Right cardiac atrium (tissue), 5 donors: ENCODE measurements at regions of chr12 and their contacts with region 1.

Region 1: GRCh38 chr12:92136965-92137721 is 8.5 kb downstream of the BTG1 start:
- DNase-seq: no peak
- ATAC-seq: no peak
- H3K4me3 ChIP-seq: peak overlapping the region; percentile 70
- H3K27ac ChIP-seq: peak overlapping the region; percentile 42
- H3K4me1 ChIP-seq: peaks cover 13% of the 10 kb centered on the region
- H3K27me3 ChIP-seq: no peaks in the 10 kb centered on the region

Region 2: DNA sequence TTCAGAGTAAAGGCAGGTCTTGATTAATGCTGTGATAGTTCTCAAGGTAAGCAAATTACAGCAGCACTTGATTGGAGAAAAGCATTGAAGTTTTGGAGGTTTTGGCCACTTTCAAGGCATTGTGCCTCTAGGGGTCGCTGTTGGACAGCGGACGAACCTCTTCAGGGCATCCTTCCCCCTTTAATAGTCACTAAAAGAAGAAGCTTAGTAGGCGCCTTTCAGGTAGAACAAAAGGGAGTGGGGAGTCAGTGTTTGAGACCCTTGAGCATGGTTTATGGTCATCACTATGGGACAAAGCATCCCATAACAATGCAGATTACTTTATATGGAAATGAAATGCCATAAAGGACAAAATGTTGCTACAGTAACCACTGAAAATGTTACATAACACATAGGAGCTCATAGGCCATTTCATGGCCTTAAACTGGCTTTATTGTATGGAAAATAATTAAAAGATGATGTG is 755.0 kb before region 1 on chr12:
- intact Hi-C with region 1: loop called in 2 of 4 experiments (anchors 10 kb)
- DNase-seq: peak; percentile 85 to 94 (median 87)
- ATAC-seq: peak; percentile 85 to 89
- H3K4me3 ChIP-seq: peak overlapping the region; percentile 53
- H3K27ac ChIP-seq: no peak overlapping the region
- H3K4me1 ChIP-seq: peaks cover 2% of the 10 kb centered on the region
- H3K27me3 ChIP-seq: no peaks in the 10 kb centered on the region

Region 3: DNA sequence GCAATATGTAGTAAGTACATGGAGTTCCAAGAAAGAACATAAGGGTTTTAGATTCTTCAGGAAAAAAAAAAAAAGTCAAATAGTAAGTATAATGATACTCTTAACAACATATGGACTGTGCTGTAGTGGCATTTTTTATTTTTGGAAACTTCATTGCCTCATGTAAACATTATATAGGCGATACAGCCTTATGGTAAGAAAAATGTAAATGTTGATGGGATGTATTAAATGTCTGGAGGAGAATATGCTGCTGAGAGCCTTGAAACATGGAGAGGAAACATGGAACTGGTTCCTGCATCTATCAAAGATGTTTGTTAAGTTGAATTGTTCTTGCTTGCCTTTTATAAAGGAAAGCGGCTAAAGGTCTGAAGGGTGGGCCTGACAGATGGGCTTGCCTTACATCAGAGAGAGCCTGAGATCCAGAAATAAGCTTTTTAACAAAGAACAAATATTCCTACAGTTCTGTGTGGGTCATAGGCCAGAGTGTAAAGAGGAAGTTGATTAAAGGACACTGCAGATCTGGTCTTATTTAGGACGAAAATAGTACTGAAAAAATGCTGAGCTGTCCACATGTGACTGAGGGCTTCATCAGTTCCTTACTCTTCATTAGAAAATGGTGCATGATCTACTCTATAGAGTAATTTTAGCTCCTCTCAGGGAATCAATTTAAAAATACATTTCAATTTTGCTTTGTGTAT is 506.4 kb before region 1 on chr12:
- intact Hi-C with region 1: no loop called
- DNase-seq: no peak
- ATAC-seq: no peak
- H3K4me3 ChIP-seq: no peak overlapping the region
- H3K27ac ChIP-seq: no peak overlapping the region
- H3K4me1 ChIP-seq: no peaks in the 10 kb centered on the region
- H3K27me3 ChIP-seq: no peaks in the 10 kb centered on the region

Region 4: DNA sequence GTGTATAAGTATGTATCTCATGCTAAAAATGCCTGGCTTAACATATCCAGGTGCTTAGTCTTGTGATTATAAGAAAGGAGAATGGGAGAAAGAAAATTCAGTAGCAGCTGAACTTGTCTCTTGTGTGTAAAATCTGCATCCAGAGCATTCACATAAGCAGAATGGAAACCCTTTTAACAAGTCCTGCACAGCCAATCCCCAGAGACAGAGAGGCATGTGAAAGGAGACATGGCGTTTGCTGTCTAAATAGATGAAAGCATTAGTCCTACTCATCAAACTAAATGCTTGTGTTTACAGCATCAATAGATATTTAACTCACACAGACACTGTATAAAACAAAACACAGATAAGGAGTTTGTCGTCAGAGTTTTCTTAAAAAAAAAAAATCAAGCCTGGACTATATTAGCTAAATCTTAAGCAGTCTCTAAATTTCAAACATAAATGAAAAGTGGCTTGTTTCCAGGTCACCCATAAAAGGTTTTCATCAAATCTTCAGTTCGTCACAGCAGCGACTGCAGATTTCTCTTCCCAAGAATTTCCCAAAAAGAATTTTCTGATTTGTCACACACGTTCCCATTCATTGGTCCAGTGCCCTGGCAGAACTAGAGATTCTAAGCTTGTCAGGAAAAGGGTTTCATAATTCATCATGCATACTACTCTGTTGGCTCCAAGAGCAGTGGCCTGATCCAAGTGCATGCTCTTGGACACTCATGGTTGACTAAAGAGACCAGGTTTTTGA is 240.7 kb before region 1 on chr12:
- intact Hi-C with region 1: loop called in 1 of 4 experiments (anchors 10 kb)
- DNase-seq: peak; percentile 50 to 77 (median 66)
- ATAC-seq: peak; percentile 80 to 93
- H3K4me3 ChIP-seq: no peak overlapping the region
- H3K27ac ChIP-seq: no peak overlapping the region
- H3K4me1 ChIP-seq: peaks cover 4% of the 10 kb centered on the region
- H3K27me3 ChIP-seq: no peaks in the 10 kb centered on the region

Region 5: GRCh38 chr12:92002673-92003382 is 134.3 kb before region 1 on chr12:
- intact Hi-C with region 1: loop called in 1 of 4 experiments (anchors 10 kb)
- DNase-seq: no peak
- ATAC-seq: peak; percentile 85 to 95
- H3K4me3 ChIP-seq: no peak overlapping the region
- H3K27ac ChIP-seq: peak overlapping the region; percentile 32
- H3K4me1 ChIP-seq: peaks cover 4% of the 10 kb centered on the region
- H3K27me3 ChIP-seq: no peaks in the 10 kb centered on the region

Region 6: GRCh38 chr12:92059976-92060375 is 77.2 kb before region 1 on chr12:
- intact Hi-C with region 1: no loop called
- DNase-seq: no peak
- ATAC-seq: peak in 1 of 2 donors; percentile 24
- H3K4me3 ChIP-seq: no peak overlapping the region
- H3K27ac ChIP-seq: no peak overlapping the region
- H3K4me1 ChIP-seq: peaks cover 6% of the 10 kb centered on the region
- H3K27me3 ChIP-seq: no peaks in the 10 kb centered on the region

Region 7: DNA sequence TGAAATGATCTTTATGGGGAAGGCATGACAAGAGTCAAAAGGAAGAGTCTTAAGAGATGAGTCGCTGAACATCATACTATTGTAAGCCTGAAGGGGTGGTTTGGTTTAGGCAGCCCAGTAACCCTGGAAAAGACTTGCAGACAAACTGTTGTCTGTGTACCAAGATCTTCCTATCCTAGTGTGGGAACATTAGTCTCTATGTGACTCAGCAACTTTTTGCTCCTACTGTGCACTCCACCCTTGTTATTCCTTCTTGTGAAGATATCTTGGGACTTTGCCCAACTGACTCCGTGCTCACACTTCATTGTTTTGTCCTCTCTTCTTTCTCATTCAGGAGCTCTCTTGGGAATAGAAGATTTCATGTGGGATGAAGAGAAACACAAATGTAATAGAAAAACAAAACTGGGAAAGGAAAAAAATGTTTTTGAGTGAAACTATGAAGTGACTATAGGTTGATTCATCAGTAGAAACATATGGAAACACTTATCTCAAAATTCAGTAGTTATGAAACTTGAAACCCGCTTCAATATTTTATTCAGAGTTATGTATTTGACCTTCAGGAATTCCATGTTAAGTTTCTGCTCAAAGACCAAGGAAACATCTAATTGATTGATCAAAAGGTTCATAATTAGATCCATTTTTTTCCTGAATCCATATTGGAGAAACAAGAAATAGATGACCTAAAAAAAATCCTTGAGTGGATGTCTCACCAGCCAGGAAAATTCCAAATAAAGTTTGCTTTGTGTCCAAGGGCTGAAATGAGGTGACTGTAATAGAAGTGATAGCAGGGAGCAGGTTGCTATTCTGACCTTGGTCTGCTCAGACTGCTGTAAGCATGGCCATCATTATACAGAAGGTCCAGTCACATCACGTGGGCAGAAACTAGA is 58.7 kb before region 1 on chr12:
- intact Hi-C with region 1: loop called in 2 of 4 experiments (anchors 5 to 10 kb)
- DNase-seq: no peak
- ATAC-seq: peak; percentile 64 to 88
- H3K4me3 ChIP-seq: no peak overlapping the region
- H3K27ac ChIP-seq: no peak overlapping the region
- H3K4me1 ChIP-seq: peaks cover 5% of the 10 kb centered on the region
- H3K27me3 ChIP-seq: no peaks in the 10 kb centered on the region

Region 8: DNA sequence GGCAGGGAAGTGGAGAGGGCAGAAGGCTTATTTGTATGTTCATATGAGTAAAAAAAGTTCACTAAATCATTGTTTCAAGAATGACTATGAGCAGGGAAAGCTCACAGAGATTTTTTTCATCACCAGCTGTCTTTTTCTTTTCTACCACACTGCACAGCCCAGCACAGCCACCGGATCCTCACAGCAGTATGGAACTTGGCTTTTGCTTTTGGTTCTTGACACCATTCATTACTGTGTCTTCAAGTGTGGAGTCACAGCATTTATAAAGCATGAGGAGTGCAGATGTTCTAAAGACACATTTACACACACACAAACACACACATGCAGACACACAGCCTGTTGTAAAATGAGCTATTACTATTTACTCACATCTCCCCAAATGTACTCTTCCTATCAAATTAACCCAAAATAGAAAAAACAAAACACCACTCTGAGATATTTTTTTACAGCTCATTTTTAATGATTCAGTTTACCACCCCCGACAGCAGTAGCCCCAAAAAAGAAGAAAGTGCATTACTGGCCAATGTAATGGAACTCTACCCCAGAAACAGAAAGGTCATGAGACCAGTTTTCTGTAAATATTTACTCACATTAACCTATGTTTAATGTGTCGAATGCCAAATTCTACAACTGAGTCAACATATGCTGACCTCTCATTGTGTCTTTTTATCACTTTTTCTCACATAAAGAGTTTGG is 52.0 kb before region 1 on chr12:
- intact Hi-C with region 1: loop called in 1 of 4 experiments (anchors 10 kb)
- DNase-seq: no peak
- ATAC-seq: no peak
- H3K4me3 ChIP-seq: no peak overlapping the region
- H3K27ac ChIP-seq: no peak overlapping the region
- H3K4me1 ChIP-seq: no peaks in the 10 kb centered on the region
- H3K27me3 ChIP-seq: no peaks in the 10 kb centered on the region